HCT116 (cell line): ENCODE measurements at regions of chr5 and their contacts with region 1.

Region 1: GRCh38 chr5:151492729-151493128 is 45.3 kb downstream of the SLC36A1 start:
- DNase-seq: peak; percentile 16
- ATAC-seq: peak; percentile 87
- H3K4me3 ChIP-seq: no peak overlapping the region
- H3K27ac ChIP-seq: no peak overlapping the region
- H3K4me1 ChIP-seq: peaks cover 0 to 10% of the 10 kb centered on the region in 2 experiments; a peak in 2 of 4 replicates
- H3K27me3 ChIP-seq: no peaks in the 10 kb centered on the region
- CTCF ChIP-seq: no peak
- POLR2A ChIP-seq: no peak
- RAD21 ChIP-seq: no peak

Region 2: DNA sequence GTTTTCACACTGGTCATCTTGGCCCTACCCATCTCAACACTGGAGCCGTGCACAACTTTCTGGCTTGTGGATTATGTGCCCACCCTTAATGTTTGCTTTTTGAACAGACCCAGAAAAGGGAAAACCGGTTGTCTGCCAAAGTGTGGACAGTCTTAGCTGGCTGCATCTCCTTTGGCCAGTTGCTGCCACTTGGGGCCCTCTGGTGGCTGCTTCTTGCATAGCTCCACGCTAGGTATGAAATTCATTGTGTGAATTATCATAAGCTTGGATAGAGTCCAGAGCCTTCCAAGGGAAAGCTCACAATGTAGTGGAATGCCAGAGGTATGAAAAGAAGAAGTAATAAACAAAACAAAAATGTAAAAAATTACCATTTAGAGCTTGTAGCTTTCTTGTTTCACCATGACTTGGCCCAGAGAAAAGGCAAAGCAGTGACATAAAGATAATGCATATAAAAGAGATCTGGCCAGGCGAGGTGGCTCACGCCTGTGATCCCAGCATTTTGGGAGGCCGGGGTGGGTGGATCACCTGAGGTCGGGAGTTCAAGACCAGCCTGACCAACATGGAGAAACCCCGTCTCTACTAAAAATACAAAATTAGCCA is 176.6 kb before region 1 on chr5:
- CTCF ChIA-PET with region 1: no interaction called
- POLR2A ChIA-PET with region 1: no interaction called
- RAD21 ChIA-PET with region 1: no interaction called
- intact Hi-C with region 1: loop called (anchors 10 kb)
- DNase-seq: peak; percentile 37
- ATAC-seq: peak; percentile 91
- H3K4me3 ChIP-seq: no peak overlapping the region
- H3K27ac ChIP-seq: no peak overlapping the region
- H3K4me1 ChIP-seq: no peaks in the 10 kb centered on the region
- H3K27me3 ChIP-seq: no peaks in the 10 kb centered on the region
- CTCF ChIP-seq: peak; percentile 86 to 95 (median 93)
- POLR2A ChIP-seq: no peak
- RAD21 ChIP-seq: peak; percentile 89

Region 3: DNA sequence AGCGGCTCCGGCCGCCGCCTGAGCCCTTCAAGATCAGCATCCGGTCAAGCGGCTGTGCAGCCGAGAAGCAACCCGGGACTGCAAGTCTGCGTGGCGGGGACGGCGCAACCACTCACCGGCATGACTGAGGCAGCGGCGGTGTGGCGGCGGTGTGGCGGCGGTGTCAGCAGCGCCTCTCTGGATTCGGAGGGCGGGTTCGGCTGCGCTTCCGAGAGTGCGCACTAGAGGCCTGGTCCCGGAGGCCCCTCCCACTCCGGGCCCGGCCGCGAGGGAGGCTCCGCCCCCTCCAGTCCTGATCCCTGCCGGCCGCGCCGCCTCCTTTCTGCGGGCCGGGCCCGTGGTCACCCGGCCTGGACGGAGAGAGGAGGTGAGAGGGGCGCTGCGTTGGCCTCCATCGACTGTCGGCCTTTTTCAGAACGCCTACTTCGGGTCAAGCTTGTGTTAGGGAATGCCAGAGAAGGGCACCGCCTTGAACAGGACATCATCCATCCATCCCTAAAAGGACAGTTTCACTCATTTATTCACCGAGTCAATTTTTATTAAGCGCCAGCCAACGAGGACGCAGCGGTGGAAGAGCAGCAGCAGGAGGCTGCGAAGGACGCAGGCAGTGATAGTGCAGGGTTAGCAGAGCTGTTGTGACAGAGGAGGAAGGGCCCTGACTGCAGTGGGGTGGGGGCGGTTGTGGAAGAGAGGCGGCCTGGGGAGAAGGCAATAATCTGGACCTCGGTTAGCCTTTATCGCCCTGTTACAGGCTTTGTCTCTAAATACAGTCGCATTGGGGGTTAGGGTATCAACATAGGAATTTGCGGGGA is 265.9 kb after region 1 on chr5 and contains the start of gene ATOX1:
- CTCF ChIA-PET with region 1: no interaction called
- POLR2A ChIA-PET with region 1: no interaction called
- RAD21 ChIA-PET with region 1: no interaction called
- intact Hi-C with region 1: no loop called
- DNase-seq: peak; percentile 67
- ATAC-seq: peak; percentile 99
- H3K4me3 ChIP-seq: peak within 1 kb of the TSS; percentile 93 to 98
- H3K27ac ChIP-seq: peak within 1 kb of the TSS; percentile 38; the same call in 1 of the 2 replicates
- H3K4me1 ChIP-seq: peaks cover 12 to 22% of the 10 kb centered on the region in 2 experiments
- H3K27me3 ChIP-seq: no peaks in the 10 kb centered on the region
- CTCF ChIP-seq: no peak
- POLR2A ChIP-seq: peak; percentile 68
- RAD21 ChIP-seq: no peak
- total RNA-seq, gene ATOX1: 66.2 TPM

Region 4: GRCh38 chr5:152349683-152350526 is 857.2 kb after region 1 on chr5:
- CTCF ChIA-PET with region 1: no interaction called
- POLR2A ChIA-PET with region 1: no interaction called
- RAD21 ChIA-PET with region 1: no interaction called
- intact Hi-C with region 1: loop called (anchors 5 kb)
- DNase-seq: peak; percentile 15
- ATAC-seq: peak; percentile 82
- H3K4me3 ChIP-seq: no peak overlapping the region
- H3K27ac ChIP-seq: no peak overlapping the region
- H3K4me1 ChIP-seq: no peaks in the 10 kb centered on the region
- H3K27me3 ChIP-seq: no peaks in the 10 kb centered on the region
- CTCF ChIP-seq: peak; percentile 25 to 90 (median 89); a peak in 5 of 6 replicates
- POLR2A ChIP-seq: no peak
- RAD21 ChIP-seq: peak; percentile 64